AG04449 (cell line): ENCODE measurements at regions of chr5 and their contacts with region 1.

Region 1: DNA sequence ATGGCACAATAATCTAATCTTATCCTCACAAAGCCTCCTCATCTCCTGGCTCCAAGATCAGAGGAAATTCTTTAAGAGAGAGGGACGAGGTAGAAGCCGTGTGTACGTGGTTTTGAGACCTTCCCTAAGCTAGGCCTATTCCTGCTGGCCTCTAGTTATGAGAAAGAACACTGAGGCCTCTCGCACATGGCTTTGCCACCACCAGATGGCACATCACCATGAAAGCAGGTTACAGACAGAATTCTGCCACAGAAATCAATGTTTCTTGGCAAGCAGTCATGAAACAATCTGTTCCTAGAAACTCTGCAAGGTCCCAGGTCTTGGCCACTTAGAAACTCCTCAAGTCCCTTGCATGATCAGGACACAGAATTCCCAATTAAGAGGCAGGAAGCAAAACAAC is 268.2 kb upstream of the TAS2R1 start:
- DNase-seq: no peak
- H3K4me3 ChIP-seq: no peak overlapping the region
- CTCF ChIP-seq: peak; percentile 71

Region 2: GRCh38 chr5:9916177-9916576 is 17.9 kb after region 1 on chr5:
- CTCF ChIA-PET with region 1: interaction called, 14 read pairs
- POLR2A ChIA-PET with region 1: no interaction called
- DNase-seq: no peak
- H3K4me3 ChIP-seq: no peak overlapping the region
- CTCF ChIP-seq: no peak

Region 3: DNA sequence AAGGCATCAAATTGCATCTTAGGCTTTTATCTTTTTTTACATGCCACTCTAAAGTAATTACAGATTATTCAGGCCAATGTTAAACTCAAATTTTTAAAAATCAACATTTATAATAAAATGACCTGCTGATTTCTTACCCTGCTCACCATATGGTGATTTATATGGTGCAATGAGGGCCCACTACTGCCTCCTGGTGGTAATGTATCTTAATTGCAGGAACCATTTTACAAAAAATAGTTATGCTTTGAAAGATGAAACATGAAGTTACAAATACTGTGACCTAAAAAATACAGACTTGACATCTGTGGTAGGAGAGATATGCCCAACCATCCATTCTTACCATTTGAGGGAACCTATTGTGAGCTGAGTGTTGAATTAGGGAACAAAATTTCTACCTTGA is 24.4 kb after region 1 on chr5:
- CTCF ChIA-PET with region 1: interaction called, 14 read pairs
- POLR2A ChIA-PET with region 1: no interaction called
- DNase-seq: no peak
- H3K4me3 ChIP-seq: no peak overlapping the region
- CTCF ChIP-seq: no peak

Region 4: DNA sequence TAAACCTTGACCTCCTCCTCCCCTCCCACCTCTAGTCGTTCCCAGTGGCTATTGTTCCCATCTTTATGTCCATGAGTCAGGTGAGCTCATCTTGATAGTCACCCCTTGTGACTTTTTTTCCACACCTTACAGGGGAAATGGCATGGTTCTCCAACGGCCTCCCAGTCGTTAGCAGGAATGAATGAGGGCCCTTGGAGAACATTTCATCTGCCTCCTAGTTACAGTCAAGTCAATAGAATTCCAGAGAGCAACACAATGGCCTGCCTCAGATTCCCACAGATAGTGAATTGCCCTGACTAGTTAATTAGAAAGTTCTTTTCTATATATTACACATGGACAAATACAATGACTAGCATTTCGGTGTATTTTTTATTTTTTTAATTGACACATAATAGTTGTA is 88.8 kb after region 1 on chr5:
- CTCF ChIA-PET with region 1: no interaction called
- POLR2A ChIA-PET with region 1: no interaction called
- DNase-seq: no peak
- H3K4me3 ChIP-seq: no peak overlapping the region
- CTCF ChIP-seq: no peak

Region 5: DNA sequence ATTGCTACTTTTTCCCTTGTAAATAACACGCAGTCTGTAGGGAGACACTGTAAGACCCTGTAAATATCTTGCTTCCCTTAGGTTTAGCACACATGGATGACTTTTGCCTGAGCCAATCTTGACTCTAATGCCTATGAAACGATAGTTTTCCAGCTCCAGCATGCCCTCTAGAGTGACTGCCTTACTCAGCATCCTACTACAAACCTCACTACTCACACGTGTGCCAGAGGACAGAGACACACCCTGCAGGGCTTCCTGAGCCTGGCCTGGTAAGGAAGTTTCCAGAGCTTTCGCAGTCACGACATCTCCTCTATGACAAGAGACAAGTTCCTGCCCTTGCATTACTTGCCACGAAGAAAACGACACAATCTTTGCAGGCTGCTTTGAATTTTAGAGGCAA is 213.3 kb after region 1 on chr5:
- CTCF ChIA-PET with region 1: interaction called, 15 read pairs
- POLR2A ChIA-PET with region 1: no interaction called
- DNase-seq: no peak
- H3K4me3 ChIP-seq: no peak overlapping the region
- CTCF ChIP-seq: peak; percentile 66

Region 6: DNA sequence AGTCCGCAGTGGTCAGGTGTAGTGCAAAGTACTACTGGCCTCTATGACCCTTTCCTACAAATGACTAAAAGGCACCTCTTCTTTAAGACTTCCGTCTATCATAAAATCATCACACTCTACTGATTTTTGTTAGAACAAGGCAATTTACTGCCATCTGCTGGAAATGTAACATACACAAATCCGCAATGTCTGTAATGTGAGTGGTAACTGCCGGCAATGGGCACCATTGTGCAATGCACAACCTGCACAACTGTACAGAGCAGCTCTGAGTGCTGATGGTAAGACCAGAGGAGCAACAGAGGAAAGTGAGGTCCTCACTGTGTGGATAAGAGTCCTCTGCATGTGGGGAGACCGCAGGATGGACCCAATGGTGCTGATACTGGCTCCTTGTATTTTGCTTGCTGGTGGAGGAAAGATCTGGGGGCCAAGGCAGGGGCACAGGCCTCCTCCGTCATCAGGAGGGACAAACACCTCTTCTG is 247.6 kb after region 1 on chr5:
- CTCF ChIA-PET with region 1: interaction called, 17 read pairs
- POLR2A ChIA-PET with region 1: no interaction called
- DNase-seq: peak; percentile 9
- H3K4me3 ChIP-seq: no peak overlapping the region
- CTCF ChIP-seq: no peak

Region 7: DNA sequence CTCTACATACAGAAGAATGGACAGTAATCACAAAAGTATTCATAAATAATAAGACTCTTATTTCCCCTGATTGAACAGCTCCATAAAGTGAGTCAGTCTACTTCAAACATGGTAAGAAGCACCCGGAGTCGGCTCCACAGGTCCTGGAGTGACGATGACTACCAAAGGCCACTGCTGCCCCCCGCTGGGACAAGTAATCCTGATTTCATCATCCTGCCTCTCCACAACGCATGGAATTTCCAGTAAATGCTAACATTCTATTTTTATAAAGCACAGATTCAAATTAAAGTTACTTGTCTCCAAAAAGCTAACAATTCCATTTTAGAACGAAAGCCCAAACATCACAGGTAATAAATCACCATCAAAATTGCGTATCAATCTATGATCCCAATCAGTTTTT is 335.2 kb after region 1 on chr5:
- CTCF ChIA-PET with region 1: interaction called, 13 read pairs
- POLR2A ChIA-PET with region 1: no interaction called
- DNase-seq: peak; percentile 96
- H3K4me3 ChIP-seq: no peak overlapping the region
- CTCF ChIP-seq: peak; percentile 39